CD4-positive, alpha-beta T cell (primary cell): ENCODE measurements at regions of chr18 and their contacts with region 1.

Region 1: DNA sequence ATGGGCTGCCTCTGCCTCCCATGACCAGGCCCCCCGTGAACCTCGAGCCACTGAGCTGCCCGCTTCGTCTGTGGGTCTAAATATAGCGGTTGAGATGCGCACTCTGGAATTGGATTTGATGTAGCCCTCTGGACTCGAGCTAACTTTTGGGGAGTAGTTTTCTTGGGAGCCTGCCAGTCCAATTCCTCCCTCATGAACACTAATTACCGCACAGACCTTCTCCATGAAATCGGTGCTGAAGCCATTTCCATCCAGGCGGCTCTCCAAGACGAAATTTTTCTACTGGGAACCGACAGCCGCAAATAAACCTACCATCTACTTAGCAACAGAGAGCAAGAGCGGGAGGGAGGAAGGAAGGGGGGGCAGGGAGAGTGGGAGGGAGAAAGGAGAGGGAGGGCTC is 63.6 kb downstream of the CELF4 start:
- DNase-seq: no peak
- ATAC-seq: no peak
- H3K4me3 ChIP-seq: no peak overlapping the region
- H3K4me3 Mint-ChIP-seq: no peak overlapping the region
- H3K27ac ChIP-seq: no peak overlapping the region
- H3K27ac Mint-ChIP-seq: no peak overlapping the region
- H3K4me1 ChIP-seq: no peaks in the 10 kb centered on the region
- H3K4me1 Mint-ChIP-seq: no peaks in the 10 kb centered on the region
- H3K27me3 ChIP-seq: no peaks in the 10 kb centered on the region
- H3K27me3 Mint-ChIP-seq: peaks cover 7% of the 10 kb centered on the region
- CTCF ChIP-seq: no peak

Region 2: DNA sequence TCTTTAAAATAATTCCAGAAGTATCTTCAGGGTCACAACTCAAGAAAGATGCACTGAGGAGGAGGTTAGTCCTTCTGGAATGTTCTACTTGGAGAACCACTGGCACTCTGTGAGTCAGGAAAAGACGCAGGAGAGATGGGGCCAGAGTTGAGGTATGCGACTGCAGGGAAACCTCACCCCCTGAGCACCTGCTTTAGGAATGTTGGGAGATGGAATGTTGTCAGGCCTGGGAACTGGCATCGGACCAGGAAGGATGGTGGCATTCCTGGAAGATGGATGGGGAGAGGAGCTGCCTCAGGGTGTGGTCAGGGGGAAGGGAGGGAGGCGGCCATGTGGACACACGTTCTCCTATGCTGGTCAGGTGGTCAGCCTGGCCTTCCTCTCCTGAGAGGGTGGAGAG is 82.8 kb before region 1 on chr18:
- CTCF ChIA-PET with region 1: no interaction called
- POLR2A ChIA-PET with region 1: no interaction called
- intact Hi-C with region 1: no loop called
- DNase-seq: no peak
- ATAC-seq: no peak
- H3K4me3 ChIP-seq: no peak overlapping the region
- H3K4me3 Mint-ChIP-seq: no peak overlapping the region
- H3K27ac ChIP-seq: no peak overlapping the region
- H3K27ac Mint-ChIP-seq: no peak overlapping the region
- H3K4me1 ChIP-seq: no peaks in the 10 kb centered on the region
- H3K4me1 Mint-ChIP-seq: no peaks in the 10 kb centered on the region
- H3K27me3 ChIP-seq: no peaks in the 10 kb centered on the region
- H3K27me3 Mint-ChIP-seq: no peaks in the 10 kb centered on the region
- CTCF ChIP-seq: no peak

Region 3: GRCh38 chr18:37484983-37485834 is 16.8 kb before region 1 on chr18:
- CTCF ChIA-PET with region 1: no interaction called
- POLR2A ChIA-PET with region 1: no interaction called
- intact Hi-C with region 1: no loop called
- DNase-seq: no peak
- ATAC-seq: no peak
- H3K4me3 ChIP-seq: no peak overlapping the region
- H3K4me3 Mint-ChIP-seq: no peak overlapping the region
- H3K27ac ChIP-seq: no peak overlapping the region
- H3K27ac Mint-ChIP-seq: no peak overlapping the region
- H3K4me1 ChIP-seq: peaks cover 2% of the 10 kb centered on the region
- H3K4me1 Mint-ChIP-seq: peaks cover 3% of the 10 kb centered on the region
- H3K27me3 ChIP-seq: peaks cover 36 to 45% of the 10 kb centered on the region in 2 experiments
- H3K27me3 Mint-ChIP-seq: peaks cover 71% of the 10 kb centered on the region
- CTCF ChIP-seq: no peak

Region 4: GRCh38 chr18:37527395-37527794 is 25.4 kb after region 1 on chr18:
- CTCF ChIA-PET with region 1: no interaction called
- POLR2A ChIA-PET with region 1: no interaction called
- intact Hi-C with region 1: loop called in 1 of 2 experiments (anchors 2 kb)
- DNase-seq: no peak
- ATAC-seq: no peak
- H3K4me3 ChIP-seq: no peak overlapping the region
- H3K4me3 Mint-ChIP-seq: no peak overlapping the region
- H3K27ac ChIP-seq: no peak overlapping the region
- H3K27ac Mint-ChIP-seq: no peak overlapping the region
- H3K4me1 ChIP-seq: no peaks in the 10 kb centered on the region
- H3K4me1 Mint-ChIP-seq: no peaks in the 10 kb centered on the region
- H3K27me3 ChIP-seq: peaks cover 18 to 35% of the 10 kb centered on the region in 2 experiments
- H3K27me3 Mint-ChIP-seq: peaks cover 58% of the 10 kb centered on the region
- CTCF ChIP-seq: no peak

Region 5: DNA sequence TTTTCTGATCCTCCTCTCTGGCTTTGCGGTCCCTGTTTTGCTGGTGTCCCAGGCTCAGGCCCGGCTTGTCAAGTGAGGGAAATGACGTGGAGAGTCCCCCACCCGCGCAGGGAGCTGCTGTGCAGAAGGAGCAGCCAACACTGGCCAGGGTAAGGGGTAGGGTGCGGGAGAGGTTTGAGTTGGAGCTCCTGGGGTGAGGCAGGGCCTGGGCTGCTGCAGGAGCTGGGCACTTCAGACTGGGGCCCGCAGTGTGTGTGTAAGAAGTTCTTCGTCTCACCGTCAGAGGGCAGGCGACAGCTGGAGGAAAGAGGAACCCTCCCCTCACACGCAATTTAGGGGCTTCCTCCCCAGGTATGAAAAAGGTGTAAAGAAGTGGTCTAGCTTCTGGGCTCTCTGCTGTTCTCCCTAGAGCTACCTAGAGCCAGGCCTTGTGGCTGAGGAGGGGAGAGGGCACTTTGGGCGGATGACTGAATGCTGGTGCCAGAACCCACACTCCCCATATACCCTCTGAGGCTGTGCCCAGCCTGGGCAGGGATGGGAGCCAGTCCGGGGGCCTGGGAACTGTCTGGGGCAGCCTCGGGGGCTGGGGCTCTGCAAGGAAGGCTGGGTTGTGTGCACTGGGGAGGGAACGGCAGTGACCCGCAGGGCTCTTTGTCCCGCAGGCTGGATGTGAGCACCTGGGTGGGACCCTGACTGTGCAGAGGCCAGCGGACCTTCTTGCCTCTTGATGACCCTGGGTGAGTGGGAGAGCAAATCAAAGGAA is 51.8 kb after region 1 on chr18:
- CTCF ChIA-PET with region 1: no interaction called
- POLR2A ChIA-PET with region 1: no interaction called
- intact Hi-C with region 1: no loop called
- DNase-seq: no peak
- ATAC-seq: no peak
- H3K4me3 ChIP-seq: no peak overlapping the region
- H3K4me3 Mint-ChIP-seq: no peak overlapping the region
- H3K27ac ChIP-seq: no peak overlapping the region
- H3K27ac Mint-ChIP-seq: no peak overlapping the region
- H3K4me1 ChIP-seq: no peaks in the 10 kb centered on the region
- H3K4me1 Mint-ChIP-seq: no peaks in the 10 kb centered on the region
- H3K27me3 ChIP-seq: peaks cover 0 to 3% of the 10 kb centered on the region in 2 experiments
- H3K27me3 Mint-ChIP-seq: peaks cover 16% of the 10 kb centered on the region
- CTCF ChIP-seq: no peak